Posterior vena cava (tissue), 2 donors: ENCODE measurements at regions of chr2 and their contacts with region 1.

Region 1: DNA sequence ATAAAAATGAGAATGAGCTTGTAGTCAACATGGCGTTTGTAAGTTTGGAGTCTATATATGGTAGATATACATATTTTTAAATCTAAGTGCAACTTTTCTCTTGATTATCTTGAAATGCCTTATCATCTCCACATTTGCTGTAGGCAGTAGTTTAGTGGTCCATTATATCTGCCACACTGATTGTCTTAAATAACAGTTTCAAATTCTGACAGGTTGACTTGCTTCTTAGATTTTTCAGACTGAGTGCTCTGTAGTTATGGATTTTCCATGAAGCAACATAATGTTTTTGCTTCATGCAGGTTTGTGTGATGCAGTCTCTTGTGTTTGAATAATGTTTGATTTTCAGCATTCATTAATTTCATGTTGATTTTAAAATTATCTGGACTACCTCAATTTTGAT is 12.3 kb downstream of the PARD3B start:
- DNase-seq: no peak

Region 2: DNA sequence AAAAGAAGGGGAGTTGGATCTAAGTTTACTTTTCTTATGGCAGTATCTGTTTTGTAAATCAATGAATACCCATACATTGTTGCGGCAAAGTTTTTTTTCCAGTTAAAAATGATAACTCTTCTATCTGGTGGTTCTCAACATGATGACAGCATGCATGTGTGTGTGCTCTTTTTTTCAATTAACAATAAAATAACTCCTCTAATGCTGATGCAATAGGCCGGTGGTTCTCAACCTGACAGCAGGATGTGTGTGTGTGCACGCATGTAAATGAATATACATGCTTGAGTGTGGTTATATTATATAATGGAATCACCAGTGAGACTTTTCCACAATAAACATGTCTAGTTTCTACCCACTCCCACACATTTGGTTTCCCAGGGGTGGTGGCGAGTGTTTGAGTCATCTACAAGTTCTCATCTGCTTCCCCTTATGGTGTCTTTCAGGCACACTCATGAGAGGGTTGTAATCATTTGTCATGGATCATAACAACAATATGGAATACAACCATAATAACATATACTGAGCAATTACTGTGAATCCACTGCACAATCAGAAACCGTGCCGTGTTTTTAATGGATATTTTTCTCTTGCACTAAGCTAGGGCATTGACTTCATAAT is 18.9 kb after region 1 on chr2:
- intact Hi-C with region 1: no loop called
- DNase-seq: no peak

Region 3: GRCh38 chr2:204635478-204635877 is 77.9 kb after region 1 on chr2:
- intact Hi-C with region 1: loop called in 1 of 2 experiments (anchors 2 kb)
- DNase-seq: no peak